Heart left ventricle (tissue), 16 donors: ENCODE measurements at regions of chr10 and their contacts with region 1.

Region 1: DNA sequence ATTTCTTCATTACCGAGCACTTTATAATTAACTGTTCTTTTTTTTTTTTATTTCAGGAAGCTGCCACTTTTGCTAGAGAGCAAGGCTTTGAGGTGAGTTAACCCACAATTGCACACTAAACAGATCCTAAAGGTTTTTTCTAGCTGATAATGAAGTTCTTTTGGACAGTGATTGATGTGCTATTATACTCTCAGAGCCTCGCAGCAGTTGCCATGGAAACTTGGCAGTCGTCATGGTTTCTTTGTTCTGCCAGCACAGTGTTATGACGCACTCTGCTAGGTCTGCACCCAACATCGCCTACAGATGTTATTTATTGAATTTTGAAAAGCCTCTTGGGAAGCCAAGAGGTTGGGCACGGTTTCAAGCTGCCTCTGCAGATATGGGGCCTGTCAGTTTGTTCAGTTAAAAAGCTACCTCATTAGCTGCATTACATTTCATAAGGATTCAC is 237.2 kb upstream of the KAT6B start:
- DNase-seq: peak; percentile 85 to 95 (median 94)
- ATAC-seq: peak; percentile 89 to 96 (median 94)
- H3K4me3 ChIP-seq: no peak overlapping the region
- H3K27ac ChIP-seq: peak overlapping the region; percentile 38 to 78 (median 64)
- H3K4me1 ChIP-seq: peaks cover 8 to 83% (median 56%) of the 10 kb centered on the region in 12 donors
- H3K27me3 ChIP-seq: no peaks in the 10 kb centered on the region
- CTCF ChIP-seq: no peak
- POLR2A ChIP-seq: no peak

Region 2: GRCh38 chr10:74419958-74420375 is 169.3 kb before region 1 on chr10:
- intact Hi-C with region 1: loop called in 1 of 10 experiments (anchors 10 kb)
- DNase-seq: no peak
- ATAC-seq: no peak
- H3K4me3 ChIP-seq: no peak overlapping the region
- H3K27ac ChIP-seq: no peak overlapping the region
- H3K4me1 ChIP-seq: peaks cover 0 to 8% (median 0%) of the 10 kb centered on the region in 12 donors
- H3K27me3 ChIP-seq: no peaks in the 10 kb centered on the region
- CTCF ChIP-seq: peak in 11 of 12 donors; percentile 19 to 51 (median 33)
- POLR2A ChIP-seq: no peak

Region 3: GRCh38 chr10:74486659-74487058 is 102.6 kb before region 1 on chr10:
- intact Hi-C with region 1: loop called in 1 of 10 experiments (anchors 5 kb)
- DNase-seq: no peak
- ATAC-seq: peak in 1 of 4 donors; percentile 41
- H3K4me3 ChIP-seq: no peak overlapping the region
- H3K27ac ChIP-seq: no peak overlapping the region
- H3K4me1 ChIP-seq: peaks cover 0 to 5% (median 0%) of the 10 kb centered on the region in 12 donors
- H3K27me3 ChIP-seq: no peaks in the 10 kb centered on the region
- CTCF ChIP-seq: no peak
- POLR2A ChIP-seq: no peak